ENCODE measurements at regions of chr3 and their contacts with region 1.

Region 1: DNA sequence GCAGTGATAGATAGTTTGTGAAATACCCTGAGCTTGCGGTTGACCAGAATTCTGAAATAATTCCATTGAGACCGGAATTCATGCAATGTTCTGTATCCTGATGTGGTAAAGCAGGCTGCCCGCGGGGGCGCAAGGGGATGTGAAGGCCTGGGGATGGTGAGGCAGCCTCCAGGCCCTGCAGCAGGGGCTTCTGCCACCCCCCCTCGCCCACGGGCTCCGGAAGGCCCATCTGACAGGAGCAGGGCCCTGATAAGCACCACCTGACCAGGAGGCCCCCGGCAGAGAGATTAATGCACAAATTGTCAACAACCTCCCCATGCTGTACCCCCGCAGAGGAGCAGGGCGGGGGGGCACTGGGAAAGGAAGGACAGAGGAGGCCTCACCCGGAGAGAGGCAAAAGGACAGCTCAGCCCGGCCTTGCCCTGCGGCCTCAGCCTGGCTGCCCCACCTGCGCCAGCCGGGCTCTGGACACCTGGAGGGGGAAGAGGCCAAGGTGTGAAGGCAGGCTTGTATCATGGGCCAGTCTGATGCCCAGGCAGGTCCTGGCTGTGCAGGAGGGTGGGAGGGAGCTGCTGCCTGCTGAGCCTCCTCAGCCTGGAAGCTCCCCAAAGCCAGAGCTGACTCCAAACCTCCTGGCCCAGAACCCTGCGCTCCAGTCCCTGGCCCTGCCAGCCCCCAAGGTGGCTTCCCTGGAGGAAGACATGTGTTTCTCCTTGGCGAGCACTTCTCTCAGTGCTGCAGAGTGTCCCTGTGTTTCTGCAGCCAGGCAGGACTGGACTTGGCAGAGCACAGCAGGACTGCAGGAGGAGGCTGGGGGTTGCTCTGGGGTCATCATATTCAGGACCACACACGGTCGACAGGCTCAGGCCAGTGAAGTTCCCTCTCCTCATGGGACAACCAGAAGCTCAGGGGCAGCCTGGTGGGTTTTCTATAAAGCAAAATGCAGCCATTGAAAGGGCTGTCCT is 46.5 kb downstream of the RPN1 start:
- DNase-seq: no peak
- ATAC-seq: no peak
- H3K4me3 ChIP-seq: no peak overlapping the region
- H3K4me1 ChIP-seq: peaks cover 7% of the 10 kb centered on the region
- CTCF ChIP-seq: no peak

Region 2: DNA sequence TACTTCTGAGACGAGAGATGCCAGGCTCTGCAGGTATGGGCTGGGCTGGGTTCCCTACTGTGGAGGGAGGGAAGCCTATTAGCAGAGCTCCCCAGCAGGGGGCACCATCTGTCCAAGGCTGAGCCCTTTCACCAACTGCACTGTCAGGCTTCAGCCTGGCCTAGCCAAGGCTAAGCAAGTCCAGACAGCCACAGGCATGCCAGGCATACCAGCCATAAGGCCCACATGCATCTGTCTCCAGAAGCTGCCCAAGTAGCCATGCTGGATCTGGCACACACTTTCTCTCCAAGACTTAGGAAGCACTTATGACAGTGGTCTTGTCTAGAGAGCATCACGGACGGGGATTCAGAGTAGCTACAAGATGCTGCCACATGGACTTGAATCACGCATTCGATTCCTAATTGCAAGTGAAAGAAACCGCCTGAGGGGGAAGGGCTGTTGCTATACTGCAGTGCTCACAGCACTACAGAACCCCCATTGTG is 508.8 kb before region 1 on chr3:
- intact Hi-C with region 1: loop called in 1 of 2 experiments (anchors 10 kb)
- DNase-seq: peak; percentile 76 to 93 (median 87)
- ATAC-seq: peak; percentile 96
- H3K4me3 ChIP-seq: no peak overlapping the region
- H3K4me1 ChIP-seq: peaks cover 8% of the 10 kb centered on the region
- CTCF ChIP-seq: peak; percentile 63

Region 3: DNA sequence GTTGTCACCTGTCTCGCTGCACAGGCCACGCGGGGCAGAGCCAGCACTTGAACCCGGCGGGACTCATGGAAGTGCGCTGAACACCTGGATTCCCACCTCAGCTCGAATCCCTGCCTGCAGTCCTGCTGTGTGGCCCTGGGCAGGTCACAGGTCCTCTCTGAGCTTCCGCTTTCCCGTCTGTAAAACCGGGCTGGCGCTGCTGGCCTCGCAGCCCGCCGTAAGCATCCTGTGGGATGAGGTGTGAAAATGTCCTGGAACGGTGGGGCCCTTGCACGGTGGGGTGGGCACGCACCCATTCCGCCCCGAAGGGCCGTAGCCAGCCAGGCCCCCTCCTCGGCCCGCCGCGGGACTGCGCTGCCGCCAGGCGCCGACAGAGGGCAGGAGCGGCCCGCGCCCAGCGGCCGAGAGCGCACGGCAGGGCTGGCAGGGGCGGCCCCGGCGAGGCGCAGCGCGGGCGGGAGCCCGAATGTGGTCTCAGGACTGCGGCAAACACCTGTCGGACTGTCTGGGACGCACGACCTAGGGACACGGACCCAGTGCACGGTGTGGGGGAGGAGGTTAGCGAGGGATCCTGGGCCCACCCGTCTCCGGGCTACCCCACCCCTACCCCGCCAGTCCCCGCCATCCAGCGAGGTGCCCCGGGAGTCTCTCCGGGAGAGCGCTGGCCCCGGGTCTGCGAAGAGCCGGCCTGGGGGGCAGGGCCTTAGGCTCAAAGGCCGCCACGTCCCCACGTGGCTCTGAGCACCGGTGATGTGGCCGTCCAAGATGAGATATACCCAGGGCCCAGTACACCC is 177.8 kb before region 1 on chr3:
- intact Hi-C with region 1: loop called (anchors 5 to 10 kb)
- DNase-seq: peak in 2 of 3 donors; percentile 36 to 62
- ATAC-seq: peak; percentile 90
- H3K4me3 ChIP-seq: no peak overlapping the region
- H3K4me1 ChIP-seq: no peaks in the 10 kb centered on the region
- CTCF ChIP-seq: peak; percentile 95

Region 4: GRCh38 chr3:128432971-128433704 is 171.0 kb before region 1 on chr3:
- intact Hi-C with region 1: loop called (anchors 5 to 10 kb)
- DNase-seq: no peak
- ATAC-seq: no peak
- H3K4me3 ChIP-seq: no peak overlapping the region
- H3K4me1 ChIP-seq: peaks cover 8% of the 10 kb centered on the region
- CTCF ChIP-seq: no peak

Region 5: GRCh38 chr3:128845778-128846485 is 241.8 kb after region 1 on chr3:
- intact Hi-C with region 1: no loop called
- DNase-seq: peak; percentile 84 to 89 (median 89)
- ATAC-seq: peak; percentile 95
- H3K4me3 ChIP-seq: no peak overlapping the region
- H3K4me1 ChIP-seq: peaks cover 5% of the 10 kb centered on the region
- CTCF ChIP-seq: peak; percentile 60

Region 6: GRCh38 chr3:129633751-129634392 is 1029.8 kb after region 1 on chr3:
- intact Hi-C with region 1: no loop called
- DNase-seq: no peak
- ATAC-seq: no peak
- H3K4me3 ChIP-seq: no peak overlapping the region
- H3K4me1 ChIP-seq: no peaks in the 10 kb centered on the region
- CTCF ChIP-seq: no peak

Measured in mucosa of descending colon (tissue), 3 donors.